ENCODE measurements at regions of chr5 and their contacts with region 1.

Region 1: GRCh38 chr5:72244862-72245371 is 75.1 kb downstream of the MRPS27 start:
- DNase-seq: peak in 4 of 10 donors; percentile 11 to 86 (median 38)

Region 2: GRCh38 chr5:72138943-72139521 is 105.9 kb before region 1 on chr5:
- intact Hi-C with region 1: loop called (anchors 1 kb)
- DNase-seq: no peak

Region 3: DNA sequence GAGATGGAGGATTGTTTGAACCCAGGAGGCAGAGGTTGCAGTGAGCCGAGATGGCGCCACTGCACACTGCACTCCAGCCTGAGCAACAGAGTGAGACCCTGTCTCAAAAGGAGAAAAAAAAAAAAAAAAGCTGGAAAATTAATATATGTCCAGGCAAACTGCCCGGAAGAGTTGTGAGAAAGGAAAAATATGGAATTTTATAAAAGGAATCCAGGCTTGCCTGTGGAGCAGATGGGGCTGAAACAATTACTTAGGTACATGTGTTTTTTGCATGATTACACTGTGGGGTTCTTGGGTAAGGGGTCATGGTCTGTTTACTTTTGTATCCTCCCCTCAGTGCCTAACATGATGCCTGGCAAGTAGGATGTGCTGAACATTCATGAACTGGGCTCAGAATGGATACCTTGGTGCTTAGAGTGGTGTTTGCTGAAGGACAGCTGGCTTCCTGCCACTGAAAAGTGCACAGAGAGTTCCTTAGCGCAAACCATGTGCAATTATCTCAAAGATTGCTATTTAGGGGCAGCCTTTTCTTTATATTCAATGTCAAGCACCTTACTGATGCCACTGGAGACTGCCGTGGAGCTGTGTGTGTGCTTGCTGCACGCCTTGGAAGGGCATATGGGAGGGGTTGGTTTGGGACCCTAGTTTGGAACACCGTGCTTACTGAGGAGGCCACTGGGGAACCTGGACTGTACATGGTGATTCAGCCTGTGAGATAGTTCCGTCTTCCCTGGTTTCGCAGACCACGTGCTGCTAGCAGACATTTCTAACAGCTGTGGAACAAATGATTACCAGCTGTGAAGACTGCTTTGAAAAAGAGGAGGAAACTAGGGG is 59.2 kb before region 1 on chr5:
- intact Hi-C with region 1: loop called (anchors 10 kb)
- DNase-seq: no peak

Measured in posterior cingulate gyrus (tissue), 11 donors.